Gastrocnemius medialis (tissue), 4 donors: ENCODE measurements at regions of chr15 and their contacts with region 1.

Region 1: GRCh38 chr15:85618956-85619491 is 175.7 kb downstream of the KLHL25 start:
- DNase-seq: peak; percentile 80 to 81
- ATAC-seq: peak; percentile 68 to 77
- H3K4me3 ChIP-seq: peak overlapping the region; percentile 41 to 67 (median 54)
- H3K27ac ChIP-seq: peak overlapping the region; percentile 81 to 86 (median 82)
- H3K4me1 ChIP-seq: peaks cover 88 to 99% of the 10 kb centered on the region in 2 donors
- H3K27me3 ChIP-seq: no peaks in the 10 kb centered on the region
- CTCF ChIP-seq: no peak
- POLR2A ChIP-seq: peak; percentile 54 to 78

Region 2: GRCh38 chr15:85576392-85576791 is 42.6 kb before region 1 on chr15:
- in situ Hi-C with region 1: no loop called
- intact Hi-C with region 1: no loop called
- DNase-seq: no peak
- ATAC-seq: no peak
- H3K4me3 ChIP-seq: no peak overlapping the region
- H3K27ac ChIP-seq: peak overlapping the region in 2 of 4 donors; percentile 25 to 41
- H3K4me1 ChIP-seq: peaks cover 48% of the 10 kb centered on the region in 2 donors
- H3K27me3 ChIP-seq: no peaks in the 10 kb centered on the region
- CTCF ChIP-seq: no peak
- POLR2A ChIP-seq: no peak

Region 3: GRCh38 chr15:85587707-85588401 is 31.2 kb before region 1 on chr15:
- in situ Hi-C with region 1: no loop called
- intact Hi-C with region 1: loop called (anchors 2 kb)
- DNase-seq: no peak
- ATAC-seq: peak in 1 of 2 donors; percentile 21
- H3K4me3 ChIP-seq: peak overlapping the region in 1 of 4 donors; percentile 5
- H3K27ac ChIP-seq: peak overlapping the region; percentile 88 to 96 (median 90)
- H3K4me1 ChIP-seq: peaks cover 79% of the 10 kb centered on the region in 2 donors
- H3K27me3 ChIP-seq: no peaks in the 10 kb centered on the region
- CTCF ChIP-seq: no peak
- POLR2A ChIP-seq: no peak

Region 4: GRCh38 chr15:85707519-85708338 is 88.7 kb after region 1 on chr15:
- in situ Hi-C with region 1: loop called in 2 of 4 experiments (anchors 10 kb)
- intact Hi-C with region 1: loop called (anchors 2 kb)
- DNase-seq: peak in 1 of 2 donors; percentile 56
- ATAC-seq: peak; percentile 76 to 84
- H3K4me3 ChIP-seq: peak overlapping the region; percentile 24 to 40 (median 29)
- H3K27ac ChIP-seq: peak overlapping the region; percentile 82 to 86 (median 84)
- H3K4me1 ChIP-seq: peaks cover 63% of the 10 kb centered on the region in 2 donors
- H3K27me3 ChIP-seq: no peaks in the 10 kb centered on the region
- CTCF ChIP-seq: peak in 1 of 5 experiments; percentile 9
- POLR2A ChIP-seq: peak in 1 of 2 donors; percentile 47